CD4-positive, alpha-beta T cell (primary cell): ENCODE measurements at regions of chr3 and their contacts with region 1.

Region 1: GRCh38 chr3:152574461-152575079 is 260.4 kb upstream of the P2RY1 start:
- DNase-seq: peak in 9 of 14 experiments; percentile 4 to 44 (median 24)
- ATAC-seq: no peak
- H3K4me3 ChIP-seq: no peak overlapping the region
- H3K4me3 Mint-ChIP-seq: no peak overlapping the region
- H3K27ac ChIP-seq: no peak overlapping the region
- H3K27ac Mint-ChIP-seq: no peak overlapping the region
- H3K4me1 ChIP-seq: no peaks in the 10 kb centered on the region
- H3K4me1 Mint-ChIP-seq: no peaks in the 10 kb centered on the region
- H3K27me3 ChIP-seq: no peaks in the 10 kb centered on the region
- H3K27me3 Mint-ChIP-seq: peaks cover 4% of the 10 kb centered on the region
- CTCF ChIP-seq: peak; percentile 43

Region 2: GRCh38 chr3:151439652-151440129 is 1134.9 kb before region 1 on chr3:
- CTCF ChIA-PET with region 1: no interaction called
- POLR2A ChIA-PET with region 1: no interaction called
- intact Hi-C with region 1: loop called in 1 of 2 experiments (anchors 2 kb)
- DNase-seq: peak in 4 of 14 experiments; percentile 4 to 58 (median 44)
- ATAC-seq: peak; percentile 46
- H3K4me3 ChIP-seq: no peak overlapping the region
- H3K4me3 Mint-ChIP-seq: no peak overlapping the region
- H3K27ac ChIP-seq: no peak overlapping the region
- H3K27ac Mint-ChIP-seq: no peak overlapping the region
- H3K4me1 ChIP-seq: no peaks in the 10 kb centered on the region
- H3K4me1 Mint-ChIP-seq: no peaks in the 10 kb centered on the region
- H3K27me3 ChIP-seq: no peaks in the 10 kb centered on the region
- H3K27me3 Mint-ChIP-seq: peaks cover 4% of the 10 kb centered on the region
- CTCF ChIP-seq: peak; percentile 73

Region 3: GRCh38 chr3:152550284-152550683 is 24.3 kb before region 1 on chr3:
- CTCF ChIA-PET with region 1: no interaction called
- POLR2A ChIA-PET with region 1: no interaction called
- intact Hi-C with region 1: no loop called
- DNase-seq: no peak
- ATAC-seq: no peak
- H3K4me3 ChIP-seq: no peak overlapping the region
- H3K4me3 Mint-ChIP-seq: no peak overlapping the region
- H3K27ac ChIP-seq: no peak overlapping the region
- H3K27ac Mint-ChIP-seq: no peak overlapping the region
- H3K4me1 ChIP-seq: no peaks in the 10 kb centered on the region
- H3K4me1 Mint-ChIP-seq: no peaks in the 10 kb centered on the region
- H3K27me3 ChIP-seq: no peaks in the 10 kb centered on the region
- H3K27me3 Mint-ChIP-seq: peaks cover 4% of the 10 kb centered on the region
- CTCF ChIP-seq: no peak